ENCODE measurements at regions of chr2 and their contacts with region 1.

Region 1: DNA sequence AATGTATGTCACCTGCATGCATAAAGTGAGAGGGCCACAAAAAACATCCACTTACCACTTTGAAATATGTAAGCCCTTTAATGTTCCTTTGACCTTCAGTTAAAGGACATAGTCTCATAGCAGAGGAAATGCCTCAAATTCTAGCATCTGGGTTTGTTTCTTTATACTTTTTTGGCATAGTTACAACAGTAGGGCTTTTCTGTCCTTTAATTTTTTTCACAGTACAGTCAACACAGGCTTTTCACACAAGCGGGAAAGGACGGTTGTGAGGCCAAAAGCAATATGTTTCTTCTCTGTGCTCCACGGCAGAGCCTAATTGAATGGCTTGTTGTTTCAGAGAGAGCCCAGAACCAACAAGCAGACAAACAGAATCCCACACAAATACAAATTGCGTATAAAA is 57.6 kb downstream of the CRIM1 start:
- DNase-seq: peak; percentile 36
- ATAC-seq: peak; percentile 16; the same call in 1 of the 3 replicates
- H3K4me3 ChIP-seq: no peak overlapping the region
- H3K27ac ChIP-seq: peak overlapping the region; percentile 17
- H3K4me1 ChIP-seq: peaks cover 51% of the 10 kb centered on the region
- H3K27me3 ChIP-seq: no peaks in the 10 kb centered on the region
- CTCF ChIP-seq: no peak
- EP300 ChIP-seq: 0 out of 4 replicates have a peak, but pooled peaks of 1 of the 2 experiments have one; percentile 25
- POLR2A ChIP-seq: no peak
- RAD21 ChIP-seq: no peak

Region 2: GRCh38 chr2:36433311-36434217 is 20.3 kb after region 1 on chr2:
- CTCF ChIA-PET with region 1: no interaction called
- POLR2A ChIA-PET with region 1: no interaction called
- in situ Hi-C with region 1: no loop called
- intact Hi-C with region 1: loop called (anchors 2 kb)
- DNase-seq: peak; percentile 97
- ATAC-seq: peak; percentile 98
- H3K4me3 ChIP-seq: no peak overlapping the region; a peak in 1 of 6 replicates
- H3K27ac ChIP-seq: peak overlapping the region; percentile 5
- H3K4me1 ChIP-seq: peaks cover 34% of the 10 kb centered on the region
- H3K27me3 ChIP-seq: no peaks in the 10 kb centered on the region
- CTCF ChIP-seq: no peak
- EP300 ChIP-seq: peak; percentile 39 to 80; a peak in 3 of 4 replicates
- POLR2A ChIP-seq: no peak
- RAD21 ChIP-seq: peak; percentile 16; the same call in 1 of the 2 replicates

Region 3: GRCh38 chr2:36450466-36451196 is 37.4 kb after region 1 on chr2:
- CTCF ChIA-PET with region 1: no interaction called
- POLR2A ChIA-PET with region 1: no interaction called
- in situ Hi-C with region 1: no loop called
- intact Hi-C with region 1: loop called (anchors 5 kb)
- DNase-seq: peak; percentile 37
- ATAC-seq: peak; percentile 37; the same call in 1 of the 3 replicates
- H3K4me3 ChIP-seq: no peak overlapping the region
- H3K27ac ChIP-seq: no peak overlapping the region
- H3K4me1 ChIP-seq: peaks cover 73% of the 10 kb centered on the region
- H3K27me3 ChIP-seq: no peaks in the 10 kb centered on the region
- CTCF ChIP-seq: no peak
- EP300 ChIP-seq: no peak
- POLR2A ChIP-seq: no peak
- RAD21 ChIP-seq: no peak